SK-N-SH (cell line): ENCODE measurements at regions of chr7 and their contacts with region 1.

Region 1: DNA sequence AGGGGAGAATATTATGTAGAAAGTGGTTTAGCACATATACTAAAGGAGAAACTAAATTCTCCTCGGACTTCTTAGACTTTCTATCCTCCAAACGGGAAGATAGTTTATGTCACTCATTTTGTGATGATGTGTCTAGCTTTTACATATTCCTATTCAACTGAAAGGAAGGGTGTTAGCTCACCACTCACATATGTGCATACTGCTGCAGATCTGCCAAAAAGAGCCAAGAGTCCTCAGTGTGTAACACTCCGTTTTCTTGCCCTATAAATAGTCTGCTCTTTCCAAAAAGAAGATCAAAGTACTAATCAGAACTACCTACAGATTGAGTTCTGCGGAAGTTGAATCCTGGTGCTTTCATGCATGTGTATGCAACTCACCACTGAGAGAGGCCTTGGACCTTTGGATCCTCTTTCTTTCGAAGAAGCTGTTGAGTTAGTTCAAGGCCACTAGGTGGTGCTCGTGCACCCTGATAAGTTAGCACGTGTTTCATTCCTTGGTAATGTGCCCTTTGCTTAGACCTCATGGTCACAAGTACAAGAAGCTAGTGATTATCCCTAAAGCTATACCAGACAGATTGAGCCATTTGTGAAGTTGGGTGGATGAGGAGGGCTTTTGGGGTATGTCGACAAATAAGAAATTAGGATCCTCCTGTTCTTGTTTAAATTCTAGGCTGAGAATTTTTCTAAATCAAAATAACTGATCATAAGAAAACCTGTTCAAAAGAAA is 14.1 kb downstream of the YAE1 start:
- DNase-seq: peak; percentile 88
- H3K4me3 ChIP-seq: no peak overlapping the region
- H3K27ac ChIP-seq: 0 out of 4 replicates have a peak overlapping the region, but pooled peaks of 1 of the 2 experiments have one; percentile 6
- H3K4me1 ChIP-seq: no peaks in the 10 kb centered on the region
- H3K27me3 ChIP-seq: no peaks in the 10 kb centered on the region
- CTCF ChIP-seq: peak; percentile 96
- EP300 ChIP-seq: no peak
- RAD21 ChIP-seq: peak; percentile 100

Region 2: GRCh38 chr7:39304668-39305405 is 275.5 kb before region 1 on chr7:
- CTCF ChIA-PET with region 1: no interaction called
- POLR2A ChIA-PET with region 1: no interaction called
- DNase-seq: no peak
- H3K4me3 ChIP-seq: no peak overlapping the region
- H3K27ac ChIP-seq: no peak overlapping the region
- H3K4me1 ChIP-seq: no peaks in the 10 kb centered on the region
- H3K27me3 ChIP-seq: peaks cover 21% of the 10 kb centered on the region
- CTCF ChIP-seq: no peak
- EP300 ChIP-seq: no peak
- RAD21 ChIP-seq: no peak

Region 3: GRCh38 chr7:39609113-39609934 is 29.0 kb after region 1 on chr7:
- CTCF ChIA-PET with region 1: interaction called, 19 read pairs
- POLR2A ChIA-PET with region 1: no interaction called
- DNase-seq: peak; percentile 85
- H3K4me3 ChIP-seq: peak overlapping the region; percentile 20 to 34; a peak in 2 of 4 replicates
- H3K27ac ChIP-seq: peak overlapping the region; percentile 62 to 91
- H3K4me1 ChIP-seq: peaks cover 20 to 31% of the 10 kb centered on the region in 2 experiments; a peak in 3 of 4 replicates
- H3K27me3 ChIP-seq: no peaks in the 10 kb centered on the region
- CTCF ChIP-seq: peak; percentile 25
- EP300 ChIP-seq: peak; percentile 72 to 92
- RAD21 ChIP-seq: no peak

Region 4: DNA sequence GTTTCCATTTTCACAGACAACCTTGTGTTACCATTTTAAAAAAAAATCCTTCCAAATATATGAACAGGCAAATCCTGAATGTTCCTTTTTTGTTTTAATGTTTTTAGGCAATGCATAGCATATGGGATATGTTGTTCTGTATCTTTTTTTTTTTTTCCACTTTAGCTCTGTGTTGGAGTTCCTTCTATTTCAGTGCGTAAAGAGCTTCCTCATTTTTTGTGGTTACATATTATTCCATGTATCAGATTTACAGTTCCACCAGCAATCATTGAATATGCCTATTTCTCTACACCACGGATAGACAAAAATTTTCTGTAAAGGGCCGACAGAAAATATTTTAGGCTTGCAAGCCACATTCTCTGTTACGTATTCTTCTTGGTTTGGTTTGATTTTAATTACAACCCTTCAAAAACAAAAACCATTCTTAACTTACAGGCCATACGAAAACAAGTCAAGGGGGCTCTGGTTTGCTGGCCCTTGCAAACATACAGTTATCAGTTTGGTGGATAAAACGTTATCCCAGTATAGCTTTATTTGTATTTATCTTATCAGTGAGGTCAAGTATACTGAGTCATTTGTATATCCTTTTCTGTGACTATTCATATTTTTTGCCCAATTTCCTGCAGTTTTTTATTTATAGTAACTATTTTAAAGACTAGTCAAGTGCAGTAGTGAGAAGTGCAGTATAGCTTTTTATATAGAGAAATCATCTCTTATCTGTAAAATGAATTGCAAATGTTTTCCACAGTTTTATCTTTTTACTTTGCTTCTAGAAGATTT is 98.8 kb after region 1 on chr7:
- CTCF ChIA-PET with region 1: interaction called, 10 read pairs
- POLR2A ChIA-PET with region 1: no interaction called
- DNase-seq: no peak
- H3K4me3 ChIP-seq: no peak overlapping the region
- H3K27ac ChIP-seq: no peak overlapping the region
- H3K4me1 ChIP-seq: peaks cover 11 to 28% of the 10 kb centered on the region in 2 experiments
- H3K27me3 ChIP-seq: no peaks in the 10 kb centered on the region
- CTCF ChIP-seq: no peak
- EP300 ChIP-seq: no peak
- RAD21 ChIP-seq: no peak

Region 5: DNA sequence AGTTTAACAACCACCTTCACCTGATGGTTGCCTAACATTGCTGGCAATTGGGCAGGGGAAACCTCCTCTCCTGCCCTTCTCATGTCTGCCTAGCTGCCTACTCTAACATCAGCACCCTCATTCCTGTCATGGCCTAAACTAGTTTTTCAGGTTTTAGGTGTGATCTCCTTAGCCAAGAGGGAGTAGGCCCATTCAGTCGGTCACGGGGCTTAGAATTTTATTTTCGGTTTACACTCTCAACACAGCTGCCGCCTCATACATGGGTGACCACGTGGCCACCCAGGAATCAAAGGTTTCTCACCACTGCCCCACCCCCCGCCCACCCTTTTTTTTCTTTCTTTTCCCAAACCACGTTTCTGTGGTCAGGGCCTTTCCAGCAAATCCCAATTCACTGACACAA is 140.3 kb after region 1 on chr7:
- CTCF ChIA-PET with region 1: interaction called, 11 read pairs
- POLR2A ChIA-PET with region 1: no interaction called
- DNase-seq: no peak
- H3K4me3 ChIP-seq: no peak overlapping the region
- H3K27ac ChIP-seq: no peak overlapping the region
- H3K4me1 ChIP-seq: no peaks in the 10 kb centered on the region
- H3K27me3 ChIP-seq: no peaks in the 10 kb centered on the region
- CTCF ChIP-seq: no peak
- EP300 ChIP-seq: no peak
- RAD21 ChIP-seq: no peak

Region 6: GRCh38 chr7:39732837-39733804 is 152.8 kb after region 1 on chr7:
- CTCF ChIA-PET with region 1: interaction called, 563 read pairs
- POLR2A ChIA-PET with region 1: no interaction called
- DNase-seq: peak; percentile 95
- H3K4me3 ChIP-seq: peak overlapping the region; percentile 62 to 70
- H3K27ac ChIP-seq: peak overlapping the region; percentile 91 to 98
- H3K4me1 ChIP-seq: peaks cover 11 to 20% of the 10 kb centered on the region in 2 experiments; a peak in 3 of 4 replicates
- H3K27me3 ChIP-seq: no peaks in the 10 kb centered on the region
- CTCF ChIP-seq: no peak
- EP300 ChIP-seq: no peak; a peak in 1 of 4 replicates
- RAD21 ChIP-seq: no peak

Region 7: DNA sequence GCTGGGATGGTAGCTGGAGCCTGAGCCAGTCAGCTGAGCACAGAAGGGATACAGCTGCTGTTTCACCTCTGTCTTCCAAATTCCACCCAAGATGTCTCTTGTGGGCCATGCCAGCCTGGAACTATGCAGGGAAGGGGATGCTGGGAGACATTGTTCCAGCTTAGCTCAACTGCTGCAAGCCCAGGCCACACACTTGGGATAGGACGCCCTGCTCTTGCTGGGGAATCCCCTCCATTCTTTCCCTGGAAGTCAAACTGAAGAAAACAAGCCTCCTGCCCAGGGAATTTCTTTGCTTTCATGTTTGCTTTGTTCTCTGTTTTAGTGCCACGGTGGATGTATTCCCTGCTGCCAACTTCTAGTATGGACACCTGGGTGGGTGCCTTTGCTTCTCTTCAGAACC is 314.6 kb after region 1 on chr7:
- CTCF ChIA-PET with region 1: interaction called, 11 read pairs
- POLR2A ChIA-PET with region 1: no interaction called
- DNase-seq: no peak
- H3K4me3 ChIP-seq: no peak overlapping the region
- H3K27ac ChIP-seq: no peak overlapping the region
- H3K4me1 ChIP-seq: no peaks in the 10 kb centered on the region; a peak in 1 of 4 replicates
- H3K27me3 ChIP-seq: peaks cover 18% of the 10 kb centered on the region; the same call in 1 of the 2 replicates
- CTCF ChIP-seq: no peak
- EP300 ChIP-seq: no peak
- RAD21 ChIP-seq: no peak